ENCODE measurements at regions of chr18 and their contacts with region 1.

Region 1: DNA sequence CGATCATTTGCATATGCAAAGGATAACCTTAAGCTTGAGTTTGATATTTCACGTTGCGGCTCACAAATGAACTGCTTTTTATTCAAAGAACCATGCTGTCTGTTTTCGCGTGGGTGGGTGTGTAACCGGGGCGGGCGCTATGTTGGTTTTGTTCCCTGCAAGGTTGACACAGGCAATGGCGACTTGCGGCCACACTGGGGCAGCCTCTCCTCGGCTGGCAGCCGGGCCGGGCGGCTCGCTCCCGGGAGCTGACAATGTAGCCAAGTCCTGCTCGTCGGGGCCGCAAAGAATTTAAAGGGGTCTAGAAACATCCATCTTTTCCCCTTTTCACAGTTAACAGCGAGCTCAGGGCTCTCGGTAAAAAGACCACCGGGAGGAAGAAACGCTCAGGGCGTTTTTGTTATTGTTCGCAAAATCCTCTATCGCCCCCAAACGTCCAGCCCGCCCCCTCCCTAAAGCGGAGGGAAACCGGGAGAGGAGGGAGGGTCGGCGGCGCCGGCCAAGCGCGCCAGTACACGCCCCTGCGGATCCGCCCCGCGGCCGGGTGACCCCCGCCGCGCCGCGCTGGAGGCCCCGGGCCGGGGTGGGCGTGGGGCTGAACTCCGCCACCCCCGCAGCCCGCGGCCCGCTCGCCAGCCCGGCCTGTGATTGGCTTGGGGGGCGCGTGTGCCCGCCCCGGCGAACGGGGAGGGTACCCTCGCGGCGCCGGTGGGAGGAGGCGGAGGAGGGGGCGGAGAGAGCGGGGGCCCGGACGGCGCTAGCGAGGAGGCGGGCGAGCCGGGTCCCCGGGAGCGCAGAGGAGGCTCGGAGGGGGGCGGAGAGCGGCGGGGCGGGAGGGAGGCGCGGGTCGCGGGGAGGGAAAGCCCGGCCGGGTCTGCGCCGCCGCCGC is at the start of gene NEDD4L:
- DNase-seq: peak; percentile 81 to 91 (median 84)
- ATAC-seq: peak; percentile 82
- H3K4me3 ChIP-seq: peak within 1 kb of the TSS; percentile 71
- H3K27ac ChIP-seq: peak within 1 kb of the TSS; percentile 76
- H3K4me1 ChIP-seq: peaks cover 22 to 29% of the 10 kb centered on the region in 2 experiments; a peak in 4 of 5 replicates
- H3K27me3 ChIP-seq: no peaks in the 10 kb centered on the region
- CTCF ChIP-seq: peak; percentile 70 to 81 (median 79)
- EP300 ChIP-seq: no peak
- POLR2A ChIP-seq: 0 out of 2 replicates have a peak, but pooled peaks have one; percentile 23
- RAD21 ChIP-seq: peak; percentile 85 to 89
- polyA plus RNA-seq, gene NEDD4L: 8.1 to 11.1 TPM

Region 2: DNA sequence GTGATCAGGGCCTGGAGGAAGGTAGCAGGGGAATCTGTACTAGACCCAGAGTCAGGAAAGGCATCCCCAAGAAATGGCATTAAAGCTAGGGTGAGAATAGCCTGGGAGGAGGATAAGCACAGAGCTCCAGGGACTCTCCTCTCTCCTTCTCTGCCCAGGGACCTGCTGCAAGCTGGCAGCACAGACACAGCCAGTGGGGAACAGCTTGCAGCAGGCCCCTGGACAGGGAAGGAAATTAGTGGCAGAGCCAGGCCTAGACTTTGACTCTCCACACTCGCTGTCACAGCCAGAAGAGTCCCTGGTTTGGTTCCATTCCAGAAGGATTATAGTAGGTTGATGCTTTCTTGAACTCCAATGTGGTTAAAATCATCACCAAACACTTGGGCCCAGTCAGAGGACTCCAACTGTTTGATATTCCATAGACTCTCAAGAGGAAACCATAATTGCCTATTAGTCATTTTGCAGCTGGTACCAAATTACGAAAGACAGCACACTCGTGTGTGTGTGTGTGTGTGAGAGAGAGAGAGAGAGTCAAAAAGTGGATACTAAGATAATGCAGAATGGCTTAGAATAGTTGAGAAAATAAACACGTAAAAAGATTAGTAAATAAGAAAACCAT is 145.1 kb before region 1 on chr18:
- CTCF ChIA-PET with region 1: no interaction called
- POLR2A ChIA-PET with region 1: no interaction called
- in situ Hi-C with region 1: no loop called
- intact Hi-C with region 1: no loop called
- DNase-seq: no peak
- ATAC-seq: no peak
- H3K4me3 ChIP-seq: no peak overlapping the region
- H3K27ac ChIP-seq: no peak overlapping the region
- H3K4me1 ChIP-seq: no peaks in the 10 kb centered on the region
- H3K27me3 ChIP-seq: no peaks in the 10 kb centered on the region; a peak in 1 of 5 replicates
- CTCF ChIP-seq: no peak
- EP300 ChIP-seq: no peak
- POLR2A ChIP-seq: no peak
- RAD21 ChIP-seq: no peak

Region 3: GRCh38 chr18:57959278-57959677 is 84.5 kb before region 1 on chr18:
- CTCF ChIA-PET with region 1: no interaction called
- POLR2A ChIA-PET with region 1: no interaction called
- in situ Hi-C with region 1: no loop called
- intact Hi-C with region 1: loop called (anchors 5 kb)
- DNase-seq: peak in 2 of 4 experiments; percentile 31 to 50
- ATAC-seq: peak; percentile 84
- H3K4me3 ChIP-seq: no peak overlapping the region
- H3K27ac ChIP-seq: no peak overlapping the region
- H3K4me1 ChIP-seq: no peaks in the 10 kb centered on the region
- H3K27me3 ChIP-seq: peaks cover 0 to 13% of the 10 kb centered on the region in 2 experiments; a peak in 2 of 5 replicates
- CTCF ChIP-seq: peak; percentile 41 to 56 (median 47); a peak in 5 of 6 replicates
- EP300 ChIP-seq: no peak
- POLR2A ChIP-seq: no peak
- RAD21 ChIP-seq: peak; percentile 43 to 65

Region 4: DNA sequence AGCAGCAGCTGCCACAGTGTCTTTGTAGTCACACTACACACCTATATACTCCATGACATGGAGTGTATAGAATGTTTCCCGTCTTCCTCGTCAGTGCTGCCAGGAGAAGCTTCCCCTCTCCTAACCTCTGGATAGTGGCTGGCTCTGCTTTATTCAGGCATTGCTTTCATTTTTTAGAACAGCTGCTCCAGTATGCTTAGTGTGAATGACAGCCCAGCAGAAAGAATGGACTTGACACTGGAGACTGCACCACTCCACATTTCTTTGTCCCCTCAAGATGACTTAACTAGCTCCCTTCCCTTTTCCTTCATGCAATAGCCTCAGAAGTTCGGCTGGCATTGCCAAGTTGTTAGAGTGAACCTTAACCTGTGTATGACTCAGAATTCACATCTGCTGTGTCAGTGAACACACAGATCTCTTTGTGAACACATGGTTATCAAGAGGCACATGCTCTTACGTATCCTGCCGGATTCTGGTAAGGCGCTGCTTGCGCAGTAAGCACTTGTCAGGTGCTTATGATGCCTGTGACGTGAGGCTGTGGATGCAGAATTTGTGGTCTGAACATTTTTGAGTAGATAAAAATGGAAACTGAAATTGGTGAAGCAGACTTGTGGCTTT is 74.2 kb after region 1 on chr18:
- CTCF ChIA-PET with region 1: interaction called, 17 read pairs
- POLR2A ChIA-PET with region 1: interaction called, 4 read pairs
- in situ Hi-C with region 1: loop called (anchors 5 kb)
- intact Hi-C with region 1: loop called (anchors 1 kb)
- DNase-seq: peak; percentile 68 to 83 (median 73)
- ATAC-seq: peak; percentile 87
- H3K4me3 ChIP-seq: no peak overlapping the region
- H3K27ac ChIP-seq: peak overlapping the region; percentile 27; the same call in 2 of the 3 replicates
- H3K4me1 ChIP-seq: peaks cover 3 to 14% of the 10 kb centered on the region in 2 experiments; a peak in 3 of 5 replicates
- H3K27me3 ChIP-seq: no peaks in the 10 kb centered on the region
- CTCF ChIP-seq: no peak
- EP300 ChIP-seq: peak; percentile 75
- POLR2A ChIP-seq: no peak
- RAD21 ChIP-seq: 0 out of 4 replicates have a peak, but pooled peaks of 1 of the 2 experiments have one; percentile 12

Region 5: DNA sequence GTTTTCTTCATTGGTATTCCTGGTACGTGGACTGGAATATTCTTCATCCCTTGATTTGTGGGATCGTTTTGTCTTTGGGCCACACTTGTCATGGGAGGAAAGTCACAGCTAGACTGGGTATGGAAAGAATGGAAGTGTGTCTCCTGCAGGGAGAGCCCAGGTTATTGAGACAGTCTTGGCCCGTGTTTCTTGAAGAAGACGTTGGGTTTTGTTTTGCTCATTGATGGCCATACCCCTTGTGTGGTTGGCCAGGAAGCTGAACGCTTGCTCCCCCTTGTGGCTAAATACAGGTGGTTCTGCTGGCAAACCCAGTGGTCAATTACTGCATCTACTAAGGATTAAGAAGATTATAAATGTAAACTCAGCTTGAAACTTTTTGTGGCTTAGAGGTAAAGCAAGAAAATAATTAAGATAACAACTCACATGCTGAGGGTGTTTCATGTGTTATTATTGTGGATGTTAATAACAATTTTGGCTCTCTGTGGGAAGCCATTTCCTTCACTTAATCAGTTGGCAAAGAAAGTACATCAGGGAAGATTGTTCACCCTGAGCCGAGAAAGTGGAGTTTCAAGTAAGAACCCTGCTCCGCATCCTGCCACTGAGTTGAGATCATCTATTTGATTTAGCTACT is 92.1 kb after region 1 on chr18:
- CTCF ChIA-PET with region 1: interaction called, 3 read pairs
- POLR2A ChIA-PET with region 1: no interaction called
- in situ Hi-C with region 1: no loop called
- intact Hi-C with region 1: loop called (anchors 5 kb)
- DNase-seq: peak; percentile 67 to 80 (median 75)
- ATAC-seq: peak; percentile 94
- H3K4me3 ChIP-seq: no peak overlapping the region
- H3K27ac ChIP-seq: no peak overlapping the region
- H3K4me1 ChIP-seq: peaks cover 0 to 6% of the 10 kb centered on the region in 2 experiments; a peak in 2 of 5 replicates
- H3K27me3 ChIP-seq: no peaks in the 10 kb centered on the region
- CTCF ChIP-seq: peak; percentile 80 to 93 (median 83)
- EP300 ChIP-seq: no peak
- POLR2A ChIP-seq: no peak
- RAD21 ChIP-seq: peak; percentile 61 to 65

Region 6: GRCh38 chr18:58321986-58322385 is 278.3 kb after region 1 on chr18:
- CTCF ChIA-PET with region 1: interaction called, 3 read pairs
- POLR2A ChIA-PET with region 1: no interaction called
- in situ Hi-C with region 1: no loop called
- intact Hi-C with region 1: loop called (anchors 5 kb)
- DNase-seq: peak; percentile 51 to 83 (median 64)
- ATAC-seq: peak; percentile 100
- H3K4me3 ChIP-seq: no peak overlapping the region
- H3K27ac ChIP-seq: peak overlapping the region; percentile 45; the same call in 1 of the 3 replicates
- H3K4me1 ChIP-seq: no peaks in the 10 kb centered on the region; a peak in 3 of 5 replicates
- H3K27me3 ChIP-seq: no peaks in the 10 kb centered on the region
- CTCF ChIP-seq: peak; percentile 60 to 76 (median 63)
- EP300 ChIP-seq: peak; percentile 17; the same call in 1 of the 2 replicates
- POLR2A ChIP-seq: no peak
- RAD21 ChIP-seq: peak; percentile 74 to 75

Measured in K562 (cell line).